ENCODE measurements at regions of chr14 and their contacts with region 1.

Region 1: GRCh38 chr14:52313903-52314594 is at the start of gene PTGER2:
- DNase-seq: peak; percentile 94
- ATAC-seq: peak; percentile 91
- H3K4me3 Mint-ChIP-seq: peak within 1 kb of the TSS; percentile 97
- H3K27ac Mint-ChIP-seq: peak within 1 kb of the TSS; percentile 97
- H3K4me1 Mint-ChIP-seq: peaks cover 56% of the 10 kb centered on the region
- H3K27me3 Mint-ChIP-seq: no peaks in the 10 kb centered on the region
- total RNA-seq, gene PTGER2: 115 to 119 TPM

Region 2: DNA sequence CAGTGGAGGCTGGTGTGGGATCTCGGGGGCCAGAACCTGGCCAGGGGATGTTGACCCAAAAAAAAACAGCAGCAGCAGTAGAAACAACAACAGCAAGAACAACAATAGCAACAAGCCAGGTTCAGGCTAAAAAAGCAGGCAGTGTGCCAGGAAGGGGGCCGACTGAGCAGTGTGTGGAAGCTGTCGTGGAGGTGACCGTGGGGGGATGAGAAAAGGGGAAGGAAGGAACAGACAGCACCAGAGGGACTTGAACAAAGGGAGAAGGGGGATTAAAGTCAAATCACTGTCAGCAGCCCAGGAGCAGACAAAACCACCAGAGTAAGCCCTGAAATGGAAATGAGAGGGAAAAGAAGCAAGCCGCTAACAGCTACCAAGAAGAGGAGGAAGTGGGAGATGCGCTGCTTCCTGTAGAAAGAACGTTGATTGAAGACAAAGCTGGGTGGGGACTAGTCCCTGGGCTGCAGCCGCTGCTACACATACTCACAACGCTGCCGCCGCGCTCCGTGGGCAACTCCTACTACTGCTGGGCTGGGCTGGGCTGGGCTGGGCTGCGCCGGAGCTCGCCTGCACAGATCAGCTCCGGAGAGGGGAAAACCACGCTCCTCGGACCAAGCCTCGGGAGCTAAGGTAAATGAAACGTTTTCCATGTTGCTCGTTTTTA is 453.8 kb before region 1 on chr14 and contains the start of gene GNG2:
- POLR2A ChIA-PET with region 1: interaction called, 25 read pairs
- DNase-seq: peak; percentile 82
- ATAC-seq: peak; percentile 98
- H3K4me3 Mint-ChIP-seq: peak within 1 kb of the TSS; percentile 97
- H3K27ac Mint-ChIP-seq: peak within 1 kb of the TSS; percentile 88
- H3K4me1 Mint-ChIP-seq: peaks cover 48% of the 10 kb centered on the region
- H3K27me3 Mint-ChIP-seq: no peaks in the 10 kb centered on the region
- total RNA-seq, gene GNG2: 247 to 253 TPM

Region 3: DNA sequence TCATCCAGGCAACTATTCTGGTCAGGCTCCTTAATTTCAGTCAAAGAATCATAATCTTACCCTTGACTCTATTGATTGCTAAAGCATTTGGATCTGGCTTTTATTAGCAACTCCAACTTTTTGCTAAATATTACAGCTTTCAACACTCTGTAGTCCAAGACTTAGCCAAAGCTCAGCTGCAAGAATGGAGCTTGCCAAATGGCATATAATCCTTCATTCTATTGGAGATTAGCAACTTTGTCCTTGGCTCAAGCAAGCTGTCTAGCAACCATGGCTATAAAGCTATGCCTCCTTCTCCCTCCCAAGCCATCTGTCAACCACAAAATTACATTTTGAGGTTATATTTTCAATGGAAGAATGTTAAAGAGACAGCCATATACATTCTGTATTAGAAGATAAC is 222.1 kb before region 1 on chr14:
- POLR2A ChIA-PET with region 1: no interaction called
- DNase-seq: no peak
- ATAC-seq: no peak
- H3K4me3 Mint-ChIP-seq: no peak overlapping the region
- H3K27ac Mint-ChIP-seq: no peak overlapping the region
- H3K4me1 Mint-ChIP-seq: no peaks in the 10 kb centered on the region
- H3K27me3 Mint-ChIP-seq: peaks cover 18% of the 10 kb centered on the region

Region 4: GRCh38 chr14:52267501-52268278 is 46.4 kb before region 1 on chr14 and contains the start of gene PTGDR:
- POLR2A ChIA-PET with region 1: no interaction called
- DNase-seq: peak; percentile 61
- ATAC-seq: peak; percentile 32
- H3K4me3 Mint-ChIP-seq: peak within 1 kb of the TSS; percentile 90
- H3K27ac Mint-ChIP-seq: peak within 1 kb of the TSS; percentile 30
- H3K4me1 Mint-ChIP-seq: peaks cover 39% of the 10 kb centered on the region
- H3K27me3 Mint-ChIP-seq: peaks cover 53% of the 10 kb centered on the region
- total RNA-seq, gene PTGDR: 2.6 to 3.1 TPM

Region 5: DNA sequence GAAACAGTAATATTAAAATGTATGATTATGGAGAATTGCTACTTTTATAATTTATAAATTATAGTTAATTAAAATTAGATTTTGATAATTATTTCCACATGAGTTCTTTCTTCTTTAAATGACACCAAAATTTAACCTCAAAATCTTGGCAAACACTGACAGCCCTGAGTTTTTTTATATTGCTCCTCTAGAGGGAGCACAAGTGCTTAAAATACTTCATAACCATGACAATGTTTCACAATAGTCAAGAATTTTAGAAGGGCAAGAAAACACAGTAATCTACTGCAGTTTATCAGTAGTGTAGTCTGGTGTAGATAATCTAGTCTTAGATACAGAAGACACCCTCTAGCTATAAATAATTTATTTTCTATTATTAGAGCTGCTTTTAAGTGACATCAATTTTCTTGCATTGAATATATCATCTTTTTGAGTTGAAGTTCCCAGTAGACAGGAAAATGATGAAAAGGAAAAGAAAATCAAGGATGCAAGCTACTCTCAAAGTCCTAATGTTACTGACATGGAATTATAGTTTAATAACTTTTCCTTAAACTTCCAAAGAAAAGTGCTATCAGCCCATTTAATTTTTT is 14.3 kb before region 1 on chr14:
- POLR2A ChIA-PET with region 1: interaction called, 25 read pairs
- DNase-seq: no peak
- ATAC-seq: peak; percentile 67
- H3K4me3 Mint-ChIP-seq: no peak overlapping the region
- H3K27ac Mint-ChIP-seq: no peak overlapping the region
- H3K4me1 Mint-ChIP-seq: peaks cover 43% of the 10 kb centered on the region
- H3K27me3 Mint-ChIP-seq: no peaks in the 10 kb centered on the region

Region 6: DNA sequence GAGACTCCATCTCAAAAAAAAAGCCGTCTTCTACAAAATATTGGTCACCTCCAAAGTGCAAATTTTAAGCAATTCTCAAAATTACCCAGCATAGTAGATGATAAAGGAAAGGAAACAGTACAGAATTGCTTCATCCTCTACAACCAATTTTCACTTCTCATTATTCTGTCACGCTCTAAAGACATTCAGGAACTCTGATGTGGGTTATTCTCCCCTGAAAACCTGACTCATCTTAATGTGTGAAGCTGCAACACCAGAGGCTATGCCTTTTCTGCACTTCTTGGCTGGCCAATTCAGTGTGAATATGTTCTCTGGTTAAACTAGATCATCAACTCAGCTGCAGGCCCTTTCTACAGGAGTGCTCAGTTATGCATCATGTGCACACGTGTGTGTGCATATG is 11.1 kb after region 1 on chr14:
- POLR2A ChIA-PET with region 1: interaction called, 45 read pairs
- DNase-seq: no peak
- ATAC-seq: peak; percentile 93
- H3K4me3 Mint-ChIP-seq: peak overlapping the region; percentile 78
- H3K27ac Mint-ChIP-seq: peak overlapping the region; percentile 71
- H3K4me1 Mint-ChIP-seq: peaks cover 75% of the 10 kb centered on the region
- H3K27me3 Mint-ChIP-seq: no peaks in the 10 kb centered on the region

Region 7: GRCh38 chr14:52351233-52352060 is 37.4 kb after region 1 on chr14:
- POLR2A ChIA-PET with region 1: interaction called, 225 read pairs
- DNase-seq: no peak
- ATAC-seq: peak; percentile 72
- H3K4me3 Mint-ChIP-seq: peak overlapping the region; percentile 83
- H3K27ac Mint-ChIP-seq: peak overlapping the region; percentile 95
- H3K4me1 Mint-ChIP-seq: peaks cover 67% of the 10 kb centered on the region
- H3K27me3 Mint-ChIP-seq: no peaks in the 10 kb centered on the region

Region 8: GRCh38 chr14:52402812-52403526 is 88.9 kb after region 1 on chr14:
- POLR2A ChIA-PET with region 1: interaction called, 129 read pairs
- DNase-seq: no peak
- ATAC-seq: peak; percentile 54
- H3K4me3 Mint-ChIP-seq: peak overlapping the region; percentile 37
- H3K27ac Mint-ChIP-seq: peak overlapping the region; percentile 79
- H3K4me1 Mint-ChIP-seq: peaks cover 69% of the 10 kb centered on the region
- H3K27me3 Mint-ChIP-seq: no peaks in the 10 kb centered on the region

Region 9: DNA sequence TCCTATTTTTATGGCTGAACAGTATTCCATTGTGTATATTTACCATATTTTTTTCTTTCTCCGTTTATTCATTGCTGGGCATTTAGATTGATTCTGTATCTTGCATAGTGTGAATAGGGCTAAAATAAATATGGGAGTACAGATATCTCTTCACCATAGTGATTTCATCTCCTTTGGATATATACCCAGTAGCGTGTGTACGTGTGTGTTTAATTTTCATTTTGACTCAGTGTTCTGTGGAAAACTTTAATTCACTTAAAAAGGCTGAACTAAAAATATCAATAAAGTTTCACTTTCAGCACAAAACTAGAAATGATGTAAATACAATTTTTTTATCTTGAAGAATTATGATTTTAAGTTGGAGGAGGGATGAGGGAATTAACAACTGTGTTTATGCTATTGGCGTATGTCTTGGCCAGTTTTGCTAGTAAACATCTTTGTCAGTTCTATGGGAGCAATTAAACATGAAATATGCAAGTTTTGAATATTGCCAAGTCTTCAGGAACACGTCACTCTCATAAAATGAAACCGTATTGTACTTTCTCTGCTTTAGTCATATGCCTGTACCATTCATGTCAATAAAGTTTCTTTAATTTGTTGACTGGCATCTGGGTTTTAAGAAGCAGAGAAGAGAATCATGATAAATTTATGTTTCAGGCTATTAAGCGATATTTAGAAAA is 99.8 kb after region 1 on chr14:
- POLR2A ChIA-PET with region 1: interaction called, 10 read pairs
- DNase-seq: no peak
- ATAC-seq: peak; percentile 67
- H3K4me3 Mint-ChIP-seq: peak overlapping the region; percentile 77
- H3K27ac Mint-ChIP-seq: peak overlapping the region; percentile 89
- H3K4me1 Mint-ChIP-seq: peaks cover 32% of the 10 kb centered on the region
- H3K27me3 Mint-ChIP-seq: no peaks in the 10 kb centered on the region

Region 10: DNA sequence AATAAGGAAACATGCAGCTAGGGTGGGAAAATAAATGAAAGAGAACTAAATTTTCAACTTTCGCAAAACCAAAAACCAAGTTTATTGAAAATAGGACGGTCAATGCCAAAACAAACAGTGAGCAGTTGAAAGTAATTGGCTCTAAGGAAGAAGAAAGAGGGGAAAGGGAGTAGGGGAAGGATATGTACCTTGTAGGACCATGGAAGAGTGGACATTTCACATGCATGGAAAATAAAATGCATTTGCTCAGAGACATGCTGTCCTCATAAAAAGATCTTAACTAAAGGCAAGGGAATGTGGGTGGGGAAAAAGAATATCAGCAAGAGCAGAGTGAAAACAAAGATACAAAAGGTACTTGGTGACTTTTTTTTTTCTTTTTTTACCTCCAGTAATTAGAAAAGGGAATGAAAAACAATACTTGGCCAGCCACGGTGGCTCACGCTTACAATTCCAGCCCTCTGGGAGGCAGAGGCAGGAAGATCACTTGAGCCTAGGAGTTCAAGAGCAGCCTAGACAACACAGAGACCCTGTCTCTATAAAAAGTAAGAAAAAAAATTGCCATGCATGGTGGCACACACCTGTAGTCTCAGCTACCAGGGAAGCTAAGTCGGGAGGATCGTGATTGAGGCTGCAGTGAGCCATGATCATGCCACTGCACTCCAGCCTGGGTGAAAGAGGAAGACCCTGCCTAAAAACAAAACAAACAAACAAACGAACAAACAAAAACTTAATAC is 231.7 kb after region 1 on chr14:
- POLR2A ChIA-PET with region 1: no interaction called
- DNase-seq: no peak
- ATAC-seq: no peak
- H3K4me3 Mint-ChIP-seq: no peak overlapping the region
- H3K27ac Mint-ChIP-seq: peak overlapping the region; percentile 24
- H3K4me1 Mint-ChIP-seq: peaks cover 10% of the 10 kb centered on the region
- H3K27me3 Mint-ChIP-seq: no peaks in the 10 kb centered on the region